H1 (cell line): ENCODE measurements at regions of chr4 and their contacts with region 1.

Region 1: GRCh38 chr4:73446336-73446938 is 10.4 kb downstream of the AFP start:
- DNase-seq: no peak
- H3K4me3 ChIP-seq: no peak overlapping the region
- H3K27ac ChIP-seq: no peak overlapping the region
- H3K4me1 ChIP-seq: peaks cover 4 to 9% (median 7%) of the 10 kb centered on the region in 4 experiments; a peak in 5 of 7 replicates
- H3K27me3 ChIP-seq: no peaks in the 10 kb centered on the region
- CTCF ChIP-seq: peak in 2 of 3 experiments; percentile 83 to 99; a peak in 3 of 4 replicates
- EP300 ChIP-seq: no peak
- POLR2A ChIP-seq: no peak
- RAD21 ChIP-seq: peak; percentile 69

Region 2: GRCh38 chr4:73193155-73193554 is 253.3 kb before region 1 on chr4:
- CTCF ChIA-PET with region 1: no interaction called
- POLR2A ChIA-PET with region 1: no interaction called
- DNase-seq: no peak
- H3K4me3 ChIP-seq: no peak overlapping the region
- H3K27ac ChIP-seq: no peak overlapping the region
- H3K4me1 ChIP-seq: no peaks in the 10 kb centered on the region; a peak in 1 of 7 replicates
- H3K27me3 ChIP-seq: no peaks in the 10 kb centered on the region
- CTCF ChIP-seq: no peak
- EP300 ChIP-seq: no peak
- POLR2A ChIP-seq: no peak
- RAD21 ChIP-seq: no peak

Region 3: DNA sequence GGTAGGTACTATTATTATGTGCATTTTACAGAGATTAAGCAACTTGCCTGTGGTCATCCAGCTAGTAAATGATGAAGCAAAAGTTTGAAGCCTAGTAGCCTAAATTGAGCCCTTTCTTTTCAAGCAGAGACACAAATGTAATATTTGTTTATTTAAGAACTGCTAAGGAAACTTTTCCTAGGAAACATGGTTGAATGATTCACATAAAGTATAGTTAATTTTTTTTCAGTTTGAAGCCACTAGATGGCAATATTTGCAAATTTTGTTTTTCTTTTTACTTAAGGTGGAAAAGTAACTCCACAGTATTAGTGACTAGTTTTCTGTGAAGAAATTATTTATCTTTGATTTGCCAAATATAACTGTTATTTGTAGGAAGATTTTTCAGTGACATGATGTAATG is 135.0 kb before region 1 on chr4:
- CTCF ChIA-PET with region 1: interaction called, 27 read pairs
- POLR2A ChIA-PET with region 1: no interaction called
- DNase-seq: no peak
- H3K4me3 ChIP-seq: no peak overlapping the region
- H3K27ac ChIP-seq: no peak overlapping the region
- H3K4me1 ChIP-seq: no peaks in the 10 kb centered on the region
- H3K27me3 ChIP-seq: no peaks in the 10 kb centered on the region
- CTCF ChIP-seq: no peak
- EP300 ChIP-seq: no peak
- POLR2A ChIP-seq: no peak
- RAD21 ChIP-seq: peak in 1 of 2 experiments; percentile 24; a peak in 2 of 4 replicates

Region 4: DNA sequence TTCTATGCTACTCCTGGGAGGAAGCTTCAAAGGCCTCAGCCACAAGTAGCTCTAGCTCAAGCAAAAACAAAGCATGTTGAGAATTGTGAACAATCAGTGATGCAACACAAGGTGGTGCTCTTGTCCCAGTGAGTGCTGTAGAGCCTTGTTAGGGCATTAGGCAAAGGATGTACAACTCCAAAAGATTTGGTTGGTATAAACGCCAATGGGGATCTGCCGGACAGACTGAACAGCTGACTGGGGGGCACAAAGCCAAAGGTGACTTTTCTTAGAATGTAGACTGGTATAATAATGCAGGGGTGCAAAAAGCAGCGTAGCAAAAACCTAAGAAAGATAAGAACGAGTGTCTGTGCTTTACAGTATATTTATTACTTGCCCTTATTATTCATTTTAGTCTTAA is 105.0 kb before region 1 on chr4:
- CTCF ChIA-PET with region 1: interaction called, 46 read pairs
- POLR2A ChIA-PET with region 1: no interaction called
- DNase-seq: peak in 1 of 2 experiments; percentile 53
- H3K4me3 ChIP-seq: no peak overlapping the region
- H3K27ac ChIP-seq: no peak overlapping the region
- H3K4me1 ChIP-seq: peaks cover 0 to 5% (median 1%) of the 10 kb centered on the region in 4 experiments; a peak in 4 of 7 replicates
- H3K27me3 ChIP-seq: no peaks in the 10 kb centered on the region
- CTCF ChIP-seq: peak in 2 of 3 experiments; percentile 90 to 95; a peak in 3 of 4 replicates
- EP300 ChIP-seq: no peak
- POLR2A ChIP-seq: no peak
- RAD21 ChIP-seq: peak; percentile 98 to 100

Region 5: DNA sequence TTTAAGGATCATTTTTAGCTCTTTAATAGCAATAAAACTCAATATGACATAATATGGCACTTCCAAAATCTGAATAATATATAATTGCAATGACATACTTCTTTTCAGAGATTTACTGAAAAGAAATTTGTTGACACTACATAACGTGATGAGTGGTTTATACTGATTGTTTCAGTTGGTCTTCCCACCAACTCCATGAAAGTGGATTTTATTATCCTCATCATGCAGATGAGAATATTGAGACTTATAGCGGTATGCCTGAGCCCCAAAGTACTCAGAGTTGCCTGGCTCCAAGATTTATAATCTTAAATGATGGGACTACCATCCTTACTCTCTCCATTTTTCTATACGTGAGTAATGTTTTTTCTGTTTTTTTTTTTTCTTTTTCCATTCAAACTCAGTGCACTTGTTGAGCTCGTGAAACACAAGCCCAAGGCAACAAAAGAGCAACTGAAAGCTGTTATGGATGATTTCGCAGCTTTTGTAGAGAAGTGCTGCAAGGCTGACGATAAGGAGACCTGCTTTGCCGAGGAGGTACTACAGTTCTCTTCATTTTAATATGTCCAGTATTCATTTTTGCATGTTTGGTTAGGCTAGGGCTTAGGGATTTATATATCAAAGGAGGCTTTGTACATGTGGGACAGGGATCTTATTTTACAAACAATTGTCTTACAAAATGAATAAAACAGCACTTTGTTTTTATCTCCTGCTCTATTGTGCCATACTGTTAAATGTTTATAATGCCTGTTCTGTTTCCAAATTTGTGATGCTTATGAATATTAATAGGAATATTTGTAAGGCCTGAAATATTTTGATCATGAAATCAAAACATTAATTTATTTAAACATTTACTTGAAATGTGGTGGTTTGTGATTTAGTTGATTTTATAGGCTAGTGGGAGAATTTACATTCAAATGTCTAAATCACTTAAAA is 27.1 kb before region 1 on chr4:
- CTCF ChIA-PET with region 1: interaction called, 10 read pairs
- POLR2A ChIA-PET with region 1: no interaction called
- DNase-seq: no peak
- H3K4me3 ChIP-seq: no peak overlapping the region
- H3K27ac ChIP-seq: no peak overlapping the region
- H3K4me1 ChIP-seq: peaks cover 0 to 4% (median 0%) of the 10 kb centered on the region in 4 experiments; a peak in 3 of 7 replicates
- H3K27me3 ChIP-seq: no peaks in the 10 kb centered on the region
- CTCF ChIP-seq: no peak
- EP300 ChIP-seq: no peak
- POLR2A ChIP-seq: no peak
- RAD21 ChIP-seq: no peak

Region 6: GRCh38 chr4:73434311-73434710 is 12.1 kb before region 1 on chr4:
- CTCF ChIA-PET with region 1: interaction called, 83 read pairs
- POLR2A ChIA-PET with region 1: no interaction called
- DNase-seq: no peak
- H3K4me3 ChIP-seq: no peak overlapping the region
- H3K27ac ChIP-seq: no peak overlapping the region
- H3K4me1 ChIP-seq: no peaks in the 10 kb centered on the region
- H3K27me3 ChIP-seq: no peaks in the 10 kb centered on the region
- CTCF ChIP-seq: peak in 1 of 3 experiments; percentile 40; a peak in 2 of 4 replicates
- EP300 ChIP-seq: no peak
- POLR2A ChIP-seq: no peak
- RAD21 ChIP-seq: peak; percentile 23 to 25; a peak in 3 of 4 replicates